ENCODE measurements at regions of chr17 and their contacts with region 1.

Region 1: DNA sequence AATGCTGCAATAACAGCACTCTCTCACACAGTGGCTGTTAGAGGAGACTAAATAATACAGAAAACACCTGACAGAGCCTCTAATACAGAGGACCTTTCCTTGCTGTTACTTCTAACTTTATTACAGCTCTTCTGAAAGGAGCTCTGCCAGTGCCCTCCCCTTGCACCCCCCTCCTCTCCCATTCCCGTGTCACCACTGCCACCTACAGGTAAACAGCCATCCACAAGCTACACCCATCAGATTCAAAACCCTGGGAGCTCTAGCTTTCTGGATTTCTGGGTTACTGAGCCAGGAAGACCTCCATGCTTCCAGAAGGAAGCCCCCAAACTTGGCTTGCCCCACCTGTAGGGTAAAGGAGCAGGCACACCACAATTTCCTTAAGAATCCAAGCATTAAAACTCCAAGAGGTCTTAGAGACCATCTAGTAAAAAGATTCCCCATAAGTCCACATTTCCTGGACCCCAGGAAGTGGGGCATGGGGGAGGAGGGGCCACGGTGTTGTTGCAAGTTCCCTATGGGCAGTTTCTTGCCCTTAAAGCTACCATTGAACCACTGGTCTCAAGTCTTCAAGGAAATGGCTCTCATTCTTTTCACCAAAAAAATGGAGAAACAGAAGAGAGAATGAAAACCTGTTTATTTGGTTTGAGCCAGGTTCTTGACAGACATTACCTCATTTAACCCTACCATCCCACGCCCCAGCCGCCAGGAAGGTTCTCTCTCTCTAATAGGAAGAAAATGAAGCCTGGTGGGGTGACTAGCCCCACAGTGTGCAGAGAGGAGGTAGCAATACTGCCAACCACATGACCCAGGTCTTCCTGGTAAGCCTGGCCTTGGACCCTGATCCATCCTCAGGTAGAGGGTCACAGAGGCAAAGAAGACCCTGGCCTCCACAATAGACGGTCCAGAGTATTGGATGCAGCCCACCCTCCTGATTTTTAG is 52.8 kb downstream of the TOM1L2 start:
- DNase-seq: peak; percentile 79
- CTCF ChIP-seq: peak; percentile 85

Region 2: GRCh38 chr17:17681187-17681848 is 238.1 kb before region 1 on chr17 and contains the start of gene RAI1:
- CTCF ChIA-PET with region 1: interaction called, 17 read pairs
- POLR2A ChIA-PET with region 1: no interaction called
- DNase-seq: peak; percentile 86
- CTCF ChIP-seq: peak; percentile 92

Region 3: GRCh38 chr17:17859909-17860765 is 59.3 kb before region 1 on chr17:
- CTCF ChIA-PET with region 1: interaction called, 19 read pairs
- POLR2A ChIA-PET with region 1: no interaction called
- DNase-seq: peak; percentile 86
- CTCF ChIP-seq: peak; percentile 94

Region 4: GRCh38 chr17:17900615-17901520 is 18.6 kb before region 1 on chr17:
- CTCF ChIA-PET with region 1: interaction called, 23 read pairs
- POLR2A ChIA-PET with region 1: no interaction called
- DNase-seq: no peak
- CTCF ChIP-seq: no peak

Region 5: DNA sequence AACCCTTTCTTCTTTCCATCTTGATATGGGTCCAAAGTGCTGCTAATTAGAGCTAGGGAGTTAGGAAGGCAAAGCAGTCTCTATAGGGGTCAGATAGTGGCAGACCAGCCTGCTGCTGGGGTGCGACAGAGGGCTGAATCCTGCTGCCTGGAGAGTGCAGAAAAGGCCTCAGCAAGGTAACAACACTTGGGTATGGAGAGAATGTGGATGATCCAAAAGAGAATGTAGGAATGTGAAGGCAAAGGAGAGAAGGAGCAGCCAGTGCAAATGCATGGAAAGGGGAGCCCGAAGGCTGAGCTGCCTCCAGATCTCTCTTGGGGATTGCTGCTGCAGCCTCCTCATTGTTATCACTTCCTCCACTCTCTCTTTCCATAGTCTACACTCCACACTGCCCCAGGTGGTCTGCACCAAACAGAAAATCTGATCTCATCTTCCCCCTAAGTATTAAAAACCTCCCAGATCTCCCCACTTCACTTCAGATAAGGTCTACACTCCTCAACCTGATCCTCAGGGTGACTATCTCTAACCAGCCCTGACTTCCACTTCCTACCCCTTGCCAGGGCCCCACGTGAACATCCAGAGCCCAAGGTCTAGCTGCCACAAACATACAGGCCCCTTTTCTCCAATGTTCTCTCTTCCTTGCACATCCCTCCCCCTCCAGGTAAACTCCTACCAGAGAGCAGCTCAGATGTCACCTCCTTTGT is 24.0 kb after region 1 on chr17:
- CTCF ChIA-PET with region 1: interaction called, 11 read pairs
- POLR2A ChIA-PET with region 1: no interaction called
- DNase-seq: no peak
- CTCF ChIP-seq: no peak

Region 6: GRCh38 chr17:18039535-18040260 is 120.3 kb after region 1 on chr17:
- CTCF ChIA-PET with region 1: no interaction called
- POLR2A ChIA-PET with region 1: no interaction called
- DNase-seq: peak; percentile 71
- CTCF ChIP-seq: no peak

Region 7: GRCh38 chr17:18626152-18626870 is 706.9 kb after region 1 on chr17:
- CTCF ChIA-PET with region 1: no interaction called
- POLR2A ChIA-PET with region 1: no interaction called
- DNase-seq: no peak
- CTCF ChIP-seq: no peak

Measured in GM10248 (cell line).